Calu3 (cell line): ENCODE measurements at regions of chr10 and their contacts with region 1.

Region 1: GRCh38 chr10:119489991-119490326 is 52.6 kb downstream of the RGS10 start:
- DNase-seq: no peak
- H3K4me3 Mint-ChIP-seq: peak overlapping the region; percentile 39
- H3K27ac Mint-ChIP-seq: no peak overlapping the region
- H3K4me1 Mint-ChIP-seq: no peaks in the 10 kb centered on the region
- H3K27me3 Mint-ChIP-seq: no peaks in the 10 kb centered on the region
- CTCF ChIP-seq: no peak

Region 2: DNA sequence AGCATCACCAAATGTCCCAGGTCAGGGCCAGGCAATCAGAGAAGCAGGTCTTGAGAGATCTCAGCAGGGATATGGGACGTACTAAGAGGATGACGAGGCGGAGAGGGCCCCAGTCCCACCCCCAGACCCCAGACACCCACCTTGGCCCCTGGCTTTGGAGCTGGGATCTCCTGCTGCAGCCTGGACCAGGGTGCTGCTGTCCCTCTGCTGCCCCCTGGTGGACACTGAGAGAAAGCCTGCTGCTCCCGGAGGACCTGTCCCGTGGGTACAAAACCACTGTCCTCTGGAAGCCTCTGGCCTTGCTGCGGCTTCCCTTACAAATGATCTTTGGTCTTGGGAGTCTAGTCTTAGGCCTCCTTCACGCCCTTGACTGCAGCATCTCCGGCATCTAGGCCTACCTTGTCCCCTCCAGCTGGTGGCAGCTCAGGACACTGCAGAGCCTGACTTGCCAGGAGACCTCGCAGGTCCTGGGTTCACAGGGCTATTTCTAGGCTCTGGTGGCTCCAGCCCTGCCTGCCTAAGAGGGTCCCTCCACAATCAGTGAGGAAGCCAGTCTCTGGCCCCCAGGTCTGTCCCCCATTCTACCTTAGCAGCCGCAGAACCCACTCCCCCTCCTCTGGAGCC is 44.5 kb before region 1 on chr10:
- CTCF ChIA-PET with region 1: interaction called, 9 read pairs
- intact Hi-C with region 1: loop called (anchors 5 kb)
- DNase-seq: peak; percentile 82
- H3K4me3 Mint-ChIP-seq: no peak overlapping the region
- H3K27ac Mint-ChIP-seq: no peak overlapping the region
- H3K4me1 Mint-ChIP-seq: peaks cover 8% of the 10 kb centered on the region
- H3K27me3 Mint-ChIP-seq: no peaks in the 10 kb centered on the region
- CTCF ChIP-seq: peak; percentile 69

Region 3: GRCh38 chr10:119535305-119535704 is 45.3 kb after region 1 on chr10:
- CTCF ChIA-PET with region 1: no interaction called
- intact Hi-C with region 1: no loop called
- DNase-seq: no peak
- H3K4me3 Mint-ChIP-seq: no peak overlapping the region
- H3K27ac Mint-ChIP-seq: no peak overlapping the region
- H3K4me1 Mint-ChIP-seq: peaks cover 17% of the 10 kb centered on the region
- H3K27me3 Mint-ChIP-seq: no peaks in the 10 kb centered on the region
- CTCF ChIP-seq: no peak

Region 4: DNA sequence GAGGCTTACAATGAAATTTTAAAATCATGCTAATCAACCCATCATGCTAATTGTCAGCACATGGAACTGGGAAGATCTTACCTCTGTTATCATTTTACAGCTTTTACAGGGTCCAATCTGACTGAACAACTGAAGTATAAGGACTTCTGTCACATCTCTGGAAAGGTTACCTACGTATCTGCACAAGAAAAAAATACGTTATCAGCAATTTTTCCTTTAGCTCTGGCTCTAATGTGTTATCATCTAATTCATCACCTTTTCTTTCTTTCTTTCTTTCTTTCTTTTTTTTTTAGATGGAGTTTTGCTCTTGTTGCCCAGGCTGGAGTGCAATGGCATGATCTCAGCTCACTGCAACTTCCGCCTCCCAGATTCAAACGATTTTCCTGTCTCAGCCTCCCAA is 98.1 kb after region 1 on chr10:
- CTCF ChIA-PET with region 1: no interaction called
- intact Hi-C with region 1: no loop called
- DNase-seq: no peak
- H3K4me3 Mint-ChIP-seq: no peak overlapping the region
- H3K27ac Mint-ChIP-seq: no peak overlapping the region
- H3K4me1 Mint-ChIP-seq: no peaks in the 10 kb centered on the region
- H3K27me3 Mint-ChIP-seq: no peaks in the 10 kb centered on the region
- CTCF ChIP-seq: no peak